ENCODE measurements at regions of chr6 and their contacts with region 1.

Region 1: DNA sequence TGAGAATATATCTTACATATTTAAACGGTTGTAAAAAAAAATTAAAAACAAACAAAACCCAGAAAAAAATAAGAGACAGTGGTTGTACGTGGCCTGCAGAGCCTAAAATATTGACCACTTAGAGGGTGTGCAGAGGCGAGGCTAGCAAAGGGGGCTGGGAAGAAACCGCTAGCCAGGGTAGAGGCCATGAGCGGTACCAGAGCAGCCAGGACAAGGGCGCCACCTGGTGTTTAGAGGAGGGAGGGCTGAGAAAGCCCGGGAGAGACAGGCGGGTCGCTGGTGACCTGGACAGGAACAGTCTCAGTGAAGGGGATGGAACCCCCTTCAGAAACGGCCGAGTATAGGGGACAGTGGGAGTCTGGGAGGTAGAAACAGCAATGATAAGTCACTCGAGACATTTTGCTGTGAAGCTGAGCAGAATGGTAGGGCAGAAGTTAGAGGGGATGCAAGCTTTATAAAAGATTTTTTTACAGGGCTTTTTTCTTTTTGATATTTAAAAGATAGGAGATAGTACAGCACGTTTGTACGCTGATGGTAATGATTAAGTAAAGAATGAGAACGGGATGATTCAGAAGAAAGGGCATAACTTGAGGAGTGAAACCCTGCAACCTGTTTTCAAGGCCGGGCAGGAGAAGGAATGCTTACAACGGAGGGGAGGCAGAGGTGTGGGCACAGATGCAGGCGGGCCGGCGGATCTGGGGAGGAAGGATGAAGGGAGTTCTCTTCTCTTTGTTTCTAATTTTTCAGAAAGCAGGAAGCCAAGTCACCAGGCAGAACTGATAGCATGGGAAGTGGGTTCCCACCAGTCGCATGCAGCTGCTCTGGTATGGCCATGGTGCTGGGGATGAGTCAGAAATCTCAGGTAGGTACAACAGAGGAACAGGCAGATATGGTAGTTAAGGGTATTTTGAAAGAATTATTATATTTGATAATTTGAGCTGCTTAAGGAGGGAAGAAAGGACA is 76.2 kb downstream of the FAM229B start:
- DNase-seq: peak; percentile 52 to 83 (median 75)
- ATAC-seq: peak; percentile 96
- H3K4me3 ChIP-seq: no peak overlapping the region
- H3K4me3 Mint-ChIP-seq: peak overlapping the region; percentile 57
- H3K27ac ChIP-seq: no peak overlapping the region
- H3K27ac Mint-ChIP-seq: no peak overlapping the region
- H3K4me1 ChIP-seq: peaks cover 15% of the 10 kb centered on the region
- H3K4me1 Mint-ChIP-seq: peaks cover 14% of the 10 kb centered on the region
- H3K27me3 ChIP-seq: peaks cover 0 to 5% of the 10 kb centered on the region in 2 experiments
- H3K27me3 Mint-ChIP-seq: peaks cover 33% of the 10 kb centered on the region
- CTCF ChIP-seq: peak; percentile 87

Region 2: DNA sequence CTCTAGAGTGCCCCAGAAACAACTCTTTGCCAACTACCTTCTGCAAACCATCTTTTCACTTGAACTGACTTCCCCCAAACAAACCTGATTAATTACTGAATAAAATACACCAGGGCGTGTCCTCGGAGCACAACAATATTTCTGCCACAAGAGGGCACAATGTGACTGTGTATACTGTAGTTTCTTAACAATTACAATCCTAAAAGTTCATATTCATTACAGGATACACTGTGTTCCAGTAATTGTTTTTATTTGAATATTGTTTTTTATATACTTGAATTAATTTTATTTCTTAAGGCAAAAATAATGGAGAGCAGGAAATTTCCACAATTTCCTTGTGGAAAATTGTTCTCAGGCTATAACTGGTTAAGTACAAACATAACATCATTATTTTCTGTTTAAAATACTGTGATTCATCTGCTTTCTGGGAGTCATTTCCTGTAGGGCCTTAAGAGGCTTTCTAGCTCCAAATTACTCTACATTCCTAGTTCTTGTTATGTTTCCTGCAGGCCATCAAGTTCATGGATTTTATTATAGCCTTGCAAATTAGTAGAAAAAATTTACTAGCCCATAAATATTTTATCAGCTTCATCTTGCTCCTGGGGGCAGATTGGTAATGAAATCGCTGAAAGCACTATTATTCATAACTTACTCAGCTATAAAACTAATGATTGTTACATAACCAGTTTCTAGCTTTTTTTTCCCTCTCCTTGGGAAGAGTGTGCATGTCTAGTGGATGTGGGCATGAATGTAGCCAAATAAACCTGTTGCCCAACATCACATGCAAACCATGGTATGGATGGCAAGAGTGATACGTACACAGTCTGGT is 1635.3 kb before region 1 on chr6:
- CTCF ChIA-PET with region 1: no interaction called
- POLR2A ChIA-PET with region 1: no interaction called
- intact Hi-C with region 1: loop called in 1 of 2 experiments (anchors 5 kb)
- DNase-seq: peak in 7 of 9 experiments; percentile 22 to 75 (median 53)
- ATAC-seq: peak; percentile 56
- H3K4me3 ChIP-seq: no peak overlapping the region
- H3K4me3 Mint-ChIP-seq: no peak overlapping the region
- H3K27ac ChIP-seq: no peak overlapping the region
- H3K27ac Mint-ChIP-seq: no peak overlapping the region
- H3K4me1 ChIP-seq: no peaks in the 10 kb centered on the region
- H3K4me1 Mint-ChIP-seq: no peaks in the 10 kb centered on the region
- H3K27me3 ChIP-seq: no peaks in the 10 kb centered on the region
- H3K27me3 Mint-ChIP-seq: peaks cover 3% of the 10 kb centered on the region
- CTCF ChIP-seq: peak; percentile 87

Region 3: GRCh38 chr6:111011360-111012142 is 1152.0 kb before region 1 on chr6:
- CTCF ChIA-PET with region 1: interaction called, 12 read pairs
- POLR2A ChIA-PET with region 1: no interaction called
- intact Hi-C with region 1: loop called (anchors 1 to 5 kb)
- DNase-seq: peak in 2 of 9 experiments; percentile 45 to 62
- ATAC-seq: peak; percentile 69
- H3K4me3 ChIP-seq: no peak overlapping the region
- H3K4me3 Mint-ChIP-seq: no peak overlapping the region
- H3K27ac ChIP-seq: no peak overlapping the region
- H3K27ac Mint-ChIP-seq: no peak overlapping the region
- H3K4me1 ChIP-seq: no peaks in the 10 kb centered on the region
- H3K4me1 Mint-ChIP-seq: peaks cover 4% of the 10 kb centered on the region
- H3K27me3 ChIP-seq: no peaks in the 10 kb centered on the region
- H3K27me3 Mint-ChIP-seq: no peaks in the 10 kb centered on the region
- CTCF ChIP-seq: peak; percentile 71

Region 4: GRCh38 chr6:112087136-112087911 is 76.3 kb before region 1 on chr6 and contains the starts of genes FAM229B and TUBE1:
- CTCF ChIA-PET with region 1: interaction called, 18 read pairs
- POLR2A ChIA-PET with region 1: interaction called, 3 read pairs
- intact Hi-C with region 1: loop called (anchors 1 to 5 kb)
- DNase-seq: peak; percentile 82 to 97 (median 89)
- ATAC-seq: peak; percentile 97
- H3K4me3 ChIP-seq: peak within 1 kb of the TSS; percentile 75 to 80
- H3K4me3 Mint-ChIP-seq: no peak within 1 kb of the TSS
- H3K27ac ChIP-seq: peak within 1 kb of the TSS; percentile 89 to 97
- H3K27ac Mint-ChIP-seq: no peak within 1 kb of the TSS
- H3K4me1 ChIP-seq: peaks cover 9% of the 10 kb centered on the region
- H3K4me1 Mint-ChIP-seq: peaks cover 12% of the 10 kb centered on the region
- H3K27me3 ChIP-seq: no peaks in the 10 kb centered on the region
- H3K27me3 Mint-ChIP-seq: peaks cover 3% of the 10 kb centered on the region
- CTCF ChIP-seq: no peak
- total RNA-seq, gene FAM229B: 3.1 to 3.3 TPM
- total RNA-seq, gene TUBE1: 25.6 to 30.5 TPM

Region 5: GRCh38 chr6:112113431-112113830 is 50.1 kb before region 1 on chr6:
- CTCF ChIA-PET with region 1: no interaction called
- POLR2A ChIA-PET with region 1: no interaction called
- intact Hi-C with region 1: no loop called
- DNase-seq: no peak
- ATAC-seq: no peak
- H3K4me3 ChIP-seq: no peak overlapping the region
- H3K4me3 Mint-ChIP-seq: no peak overlapping the region
- H3K27ac ChIP-seq: no peak overlapping the region
- H3K27ac Mint-ChIP-seq: no peak overlapping the region
- H3K4me1 ChIP-seq: no peaks in the 10 kb centered on the region
- H3K4me1 Mint-ChIP-seq: no peaks in the 10 kb centered on the region
- H3K27me3 ChIP-seq: no peaks in the 10 kb centered on the region
- H3K27me3 Mint-ChIP-seq: peaks cover 16% of the 10 kb centered on the region
- CTCF ChIP-seq: no peak

Region 6: GRCh38 chr6:112144145-112144926 is 19.2 kb before region 1 on chr6:
- CTCF ChIA-PET with region 1: interaction called, 12 read pairs
- POLR2A ChIA-PET with region 1: no interaction called
- intact Hi-C with region 1: no loop called
- DNase-seq: peak in 1 of 9 experiments; percentile 9
- ATAC-seq: no peak
- H3K4me3 ChIP-seq: no peak overlapping the region
- H3K4me3 Mint-ChIP-seq: no peak overlapping the region
- H3K27ac ChIP-seq: no peak overlapping the region
- H3K27ac Mint-ChIP-seq: no peak overlapping the region
- H3K4me1 ChIP-seq: no peaks in the 10 kb centered on the region
- H3K4me1 Mint-ChIP-seq: no peaks in the 10 kb centered on the region
- H3K27me3 ChIP-seq: no peaks in the 10 kb centered on the region
- H3K27me3 Mint-ChIP-seq: peaks cover 4% of the 10 kb centered on the region
- CTCF ChIP-seq: no peak

Region 7: GRCh38 chr6:112180095-112180820 is 16.7 kb after region 1 on chr6:
- CTCF ChIA-PET with region 1: interaction called, 42 read pairs
- POLR2A ChIA-PET with region 1: no interaction called
- intact Hi-C with region 1: no loop called
- DNase-seq: peak in 7 of 9 experiments; percentile 17 to 88 (median 52)
- ATAC-seq: peak; percentile 58
- H3K4me3 ChIP-seq: no peak overlapping the region
- H3K4me3 Mint-ChIP-seq: no peak overlapping the region
- H3K27ac ChIP-seq: no peak overlapping the region
- H3K27ac Mint-ChIP-seq: no peak overlapping the region
- H3K4me1 ChIP-seq: no peaks in the 10 kb centered on the region
- H3K4me1 Mint-ChIP-seq: no peaks in the 10 kb centered on the region
- H3K27me3 ChIP-seq: peaks cover 0 to 3% of the 10 kb centered on the region in 2 experiments
- H3K27me3 Mint-ChIP-seq: peaks cover 27% of the 10 kb centered on the region
- CTCF ChIP-seq: peak; percentile 84

Measured in CD8-positive, alpha-beta T cell (primary cell).